ENCODE measurements at regions of chr4 and their contacts with region 1.

Region 1: DNA sequence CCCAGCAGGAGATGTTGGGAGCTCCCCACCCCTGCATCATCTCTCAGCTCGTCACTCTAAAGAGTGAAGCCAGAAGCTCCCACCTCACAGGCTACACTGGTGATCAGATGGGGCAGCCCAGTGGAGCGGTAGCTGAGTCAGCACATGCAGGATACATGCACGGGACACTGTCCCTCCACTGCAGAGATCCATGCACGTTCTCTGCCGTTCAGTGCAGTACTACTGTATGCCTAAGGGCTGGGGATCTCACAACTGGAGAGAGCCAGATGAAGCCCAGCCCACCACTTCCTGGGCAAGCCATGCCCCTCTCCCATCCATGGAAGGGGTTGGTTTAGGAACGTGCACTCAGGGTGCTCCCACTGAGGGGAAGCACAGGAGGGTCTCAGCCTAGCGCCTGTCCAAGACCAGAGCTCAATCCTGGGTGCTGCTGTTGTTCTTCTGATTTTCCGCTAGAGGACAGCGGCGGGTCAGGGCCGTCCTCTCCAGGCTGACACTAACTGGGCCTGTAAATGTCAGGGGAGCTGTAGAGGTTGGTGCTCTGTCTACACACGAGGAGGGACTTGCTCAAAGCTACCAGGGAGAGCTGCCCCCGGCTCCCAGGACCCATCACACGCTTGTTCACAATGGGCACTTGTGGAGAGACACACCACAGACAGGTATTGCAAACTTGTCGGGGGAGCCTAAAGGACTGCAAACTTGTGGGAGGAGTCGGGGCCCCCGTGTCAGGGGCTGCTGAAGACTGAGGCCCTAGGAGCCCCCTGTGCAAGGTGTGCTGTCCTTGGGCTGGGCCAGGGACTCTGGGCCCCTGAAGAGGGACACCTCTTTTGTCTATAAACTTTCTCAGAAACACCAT is 18.2 kb upstream of the ABLIM2 start:
- DNase-seq: peak; percentile 83

Region 2: DNA sequence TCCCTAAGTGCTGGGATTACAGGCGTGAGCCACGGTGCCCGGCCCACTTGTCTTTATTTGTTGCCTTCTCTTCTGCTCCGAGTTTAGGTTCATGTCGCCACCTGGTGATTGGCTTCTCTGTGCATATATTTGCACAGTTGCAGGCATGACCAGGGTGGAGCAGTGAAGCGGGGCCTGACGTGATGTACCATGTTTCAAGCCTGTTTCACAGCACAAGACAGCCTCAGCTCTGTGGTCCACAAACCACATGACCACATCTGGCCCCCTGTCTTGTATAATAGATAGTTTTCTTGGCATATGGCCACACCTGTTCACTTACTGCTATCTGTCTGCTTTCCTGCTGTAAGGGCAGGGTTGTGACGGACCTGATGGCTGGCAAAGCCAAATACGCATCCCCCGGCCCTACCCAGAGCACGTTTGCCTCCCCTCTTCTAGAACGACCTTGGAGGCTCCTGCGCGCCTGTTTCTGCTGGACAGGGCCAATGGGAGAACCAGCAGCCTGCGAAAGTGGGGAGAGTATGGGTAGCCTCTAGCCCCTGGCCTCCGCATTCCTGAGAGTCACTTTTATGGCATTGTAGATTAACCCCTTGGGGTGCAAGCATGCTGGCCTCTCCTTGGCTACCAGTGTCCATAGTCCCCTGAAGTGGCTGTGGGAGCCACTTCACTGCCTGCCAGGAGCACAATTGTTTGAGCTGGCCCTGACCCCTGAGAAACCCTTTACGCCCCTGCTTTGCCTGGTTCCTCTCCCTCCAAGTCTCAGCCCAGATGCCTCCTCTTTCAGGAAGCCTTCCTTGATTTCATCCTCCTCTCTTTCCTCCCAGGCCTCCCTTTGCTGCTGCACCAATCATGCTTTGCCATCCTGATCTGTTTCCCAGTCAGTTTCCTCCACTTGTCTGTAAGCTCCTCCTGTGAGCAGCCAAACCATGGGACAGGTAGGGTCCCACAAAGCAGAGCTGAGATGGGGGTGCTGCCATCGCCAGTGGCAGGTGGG is 16.3 kb after region 1 on chr4:
- CTCF ChIA-PET with region 1: interaction called, 10 read pairs
- POLR2A ChIA-PET with region 1: interaction called, 3 read pairs
- DNase-seq: peak; percentile 33

Region 3: DNA sequence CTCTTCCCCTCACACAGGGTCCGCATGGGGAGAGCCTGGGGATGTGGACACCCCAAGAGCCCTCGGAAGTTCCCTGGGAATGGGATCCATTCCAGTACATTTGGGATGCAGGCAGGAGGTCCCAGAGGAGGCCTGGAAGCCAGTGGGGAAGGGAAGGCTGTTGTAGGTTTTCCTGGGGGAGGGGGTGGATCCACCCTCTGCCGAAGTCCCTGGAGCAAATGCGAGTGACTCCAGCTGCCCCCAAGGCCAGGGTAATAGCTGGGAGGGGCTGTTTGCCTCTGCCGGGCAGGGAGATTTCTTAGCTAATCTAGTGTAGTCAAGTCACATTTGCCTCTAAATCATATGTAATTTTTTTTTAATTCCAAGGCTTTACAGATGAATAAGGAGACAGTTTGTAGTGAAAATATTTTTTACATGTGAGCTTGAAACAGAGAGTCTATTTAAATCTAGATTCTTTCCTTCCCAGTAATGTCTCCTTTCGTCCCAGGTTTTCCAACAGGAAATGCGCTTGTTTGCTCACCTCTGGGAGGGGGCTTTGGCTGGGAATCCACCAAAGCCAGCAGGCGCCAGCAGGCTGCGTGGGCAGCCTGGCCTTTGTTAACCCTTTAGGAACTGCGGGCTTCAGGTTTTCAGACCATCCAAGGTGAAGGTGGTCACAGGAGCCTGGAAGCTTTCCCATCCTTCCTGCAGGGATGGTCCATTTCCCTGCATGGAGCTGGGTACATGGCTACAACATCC is 49.1 kb after region 1 on chr4:
- CTCF ChIA-PET with region 1: interaction called, 10 read pairs
- POLR2A ChIA-PET with region 1: no interaction called
- DNase-seq: no peak

Region 4: DNA sequence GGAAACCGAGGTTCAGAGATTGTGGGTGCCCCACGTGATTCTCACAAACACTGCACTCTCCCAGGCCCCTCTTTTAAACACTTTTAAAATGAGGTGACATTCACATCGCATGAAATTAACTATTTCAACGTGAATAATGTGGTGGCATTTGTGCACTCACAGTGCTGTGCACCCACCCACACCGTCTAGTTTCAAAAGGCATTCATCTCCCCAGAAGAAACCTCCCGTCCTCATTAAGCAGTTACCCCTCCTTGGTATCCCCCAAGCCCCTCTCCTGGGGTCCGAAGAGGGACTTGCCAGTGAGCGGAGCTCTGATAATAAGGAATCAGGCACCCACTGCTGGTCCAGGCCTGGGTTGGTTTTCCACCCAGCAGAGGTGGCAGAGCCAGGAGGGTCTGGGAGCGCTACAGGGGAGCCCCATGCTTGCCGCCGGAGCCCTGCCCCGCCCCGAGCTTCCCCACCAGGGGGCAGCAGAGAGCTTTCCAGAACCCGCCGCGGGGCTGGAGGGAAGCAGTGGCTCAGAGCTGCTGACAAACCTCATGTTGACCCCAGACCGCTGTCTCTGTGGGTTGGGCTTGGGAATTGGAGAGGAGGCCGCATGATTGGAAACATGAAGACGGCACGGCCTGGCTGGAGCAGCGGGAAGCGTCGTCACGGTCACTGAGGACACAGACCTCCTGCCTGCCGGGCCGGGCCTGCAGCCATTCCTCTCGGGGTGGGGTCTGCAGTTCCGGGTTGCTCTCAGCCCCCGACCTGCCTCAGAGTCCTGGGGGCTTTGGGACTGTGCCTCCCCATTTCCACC is 65.3 kb after region 1 on chr4:
- CTCF ChIA-PET with region 1: interaction called, 10 read pairs
- POLR2A ChIA-PET with region 1: no interaction called
- DNase-seq: peak; percentile 97

Region 5: DNA sequence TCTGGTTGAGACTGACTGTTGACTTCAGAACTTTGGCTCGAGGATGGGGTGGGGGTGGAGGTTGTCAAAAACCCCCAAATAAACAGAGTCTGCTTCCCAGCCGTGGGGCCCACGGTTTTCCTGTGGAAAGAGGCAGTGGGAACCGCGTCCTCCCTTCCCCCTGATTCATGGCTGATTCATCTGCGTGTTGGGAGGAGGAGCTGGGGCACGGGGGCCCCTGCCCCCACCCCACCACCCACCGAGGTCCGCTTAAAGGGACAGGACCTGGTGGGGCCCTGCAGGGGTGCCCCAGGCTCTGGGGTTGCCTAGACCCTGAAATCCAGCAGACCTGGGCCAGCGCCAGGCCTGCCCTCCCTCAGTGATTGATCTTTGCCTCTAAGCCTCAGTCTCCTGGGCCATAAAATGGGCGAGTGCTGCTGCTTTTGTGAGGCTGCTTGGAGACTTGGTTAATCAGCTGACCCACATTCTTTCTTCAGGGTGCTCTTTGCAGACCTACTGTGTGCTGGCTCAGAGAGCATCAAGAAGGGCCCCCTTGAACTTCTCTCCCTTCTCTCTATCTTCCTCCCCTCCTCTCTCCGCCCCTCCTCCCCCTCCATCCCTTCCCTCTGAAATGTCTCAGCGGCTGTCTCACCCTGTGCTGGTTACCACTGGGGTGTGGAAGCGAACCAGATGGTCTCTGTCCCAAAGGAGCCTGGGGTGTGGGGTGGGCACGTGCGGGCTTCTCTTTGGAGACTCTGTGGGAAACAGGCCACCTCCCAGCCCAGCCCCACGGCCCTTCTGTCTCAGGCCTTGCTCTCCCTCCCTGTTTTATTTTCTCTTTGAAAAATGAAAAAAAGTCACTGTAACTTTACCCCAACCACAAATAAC is 101.9 kb after region 1 on chr4:
- CTCF ChIA-PET with region 1: no interaction called
- POLR2A ChIA-PET with region 1: no interaction called
- DNase-seq: no peak

Region 6: DNA sequence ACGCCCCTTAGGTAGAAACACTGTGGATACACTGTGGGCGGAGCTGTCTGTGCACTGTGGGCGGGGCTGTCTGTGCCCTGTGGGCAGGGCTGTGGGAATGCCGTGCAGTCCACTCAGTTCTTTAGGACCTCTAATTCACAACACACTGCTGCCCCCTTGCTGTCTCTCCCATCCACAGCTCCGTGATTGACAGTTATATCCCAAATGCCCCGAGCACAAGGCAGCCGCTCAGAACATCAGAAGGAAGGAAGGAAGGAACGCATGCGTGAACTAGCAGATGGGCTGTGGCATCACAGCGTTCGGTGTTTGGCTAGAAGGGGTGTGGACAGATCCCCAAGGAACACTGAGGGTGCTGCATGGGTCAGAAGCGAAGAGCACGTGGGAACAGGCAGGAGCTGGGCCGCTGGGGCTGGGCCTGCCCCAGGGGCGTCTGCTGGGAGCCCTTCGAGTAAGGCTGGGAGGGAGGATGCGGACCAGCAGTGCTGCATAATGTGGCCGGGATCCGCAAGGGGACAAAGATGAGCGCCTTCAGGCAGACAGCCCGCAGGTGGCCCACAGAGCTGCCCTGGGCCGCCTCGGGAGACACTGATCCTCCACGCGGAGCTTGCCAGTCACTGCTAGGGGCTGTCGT is 234.0 kb after region 1 on chr4:
- CTCF ChIA-PET with region 1: interaction called, 11 read pairs
- POLR2A ChIA-PET with region 1: interaction called, 5 read pairs
- DNase-seq: peak; percentile 90

Measured in HEK293T (cell line).